Left colon (tissue), 2 donors: ENCODE measurements at regions of chr4 and their contacts with region 1.

Region 1: DNA sequence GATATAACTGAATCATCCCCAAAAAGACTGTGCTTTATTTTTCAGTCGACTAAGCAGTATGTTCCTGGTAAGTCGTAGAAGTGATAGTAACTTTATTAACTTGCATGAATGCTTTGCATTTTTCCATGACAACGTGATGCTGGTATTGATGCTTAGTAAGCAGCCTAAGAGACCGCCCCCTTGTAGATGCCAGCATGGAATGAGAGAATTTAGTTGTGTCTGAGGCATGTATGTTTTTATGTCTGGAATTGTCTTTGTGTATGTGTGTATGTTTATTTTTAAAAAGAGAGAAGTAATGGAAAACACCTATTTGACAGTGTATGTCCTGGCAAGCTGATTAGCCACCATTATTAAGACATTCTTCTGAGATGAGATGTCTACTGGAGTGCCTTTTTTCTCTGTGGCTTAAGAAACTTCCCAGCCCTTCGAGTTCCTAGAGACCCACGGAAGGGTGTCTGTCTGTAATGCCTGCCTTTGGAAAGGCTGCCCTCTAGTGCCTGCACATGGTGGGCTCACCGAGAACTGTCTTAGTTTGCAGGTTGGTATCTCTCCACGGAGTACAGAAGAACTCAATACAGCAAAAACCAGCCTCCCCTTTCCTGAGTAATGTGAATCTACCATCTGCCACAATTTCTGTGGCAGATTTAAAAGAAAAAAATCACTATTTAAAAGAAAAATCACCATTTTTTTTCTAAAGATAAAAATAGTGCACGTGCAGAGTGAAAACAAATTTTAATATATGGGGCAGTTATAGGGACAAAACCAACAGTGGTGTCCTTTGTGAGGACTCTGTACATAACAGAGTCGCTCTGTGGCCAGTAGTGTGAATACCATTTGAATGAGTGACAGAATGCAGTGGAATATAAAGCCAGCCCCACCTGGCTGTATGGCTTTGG is 85.9 kb downstream of the AASDH start:
- DNase-seq: peak; percentile 56 to 80
- ATAC-seq: peak; percentile 79

Region 2: DNA sequence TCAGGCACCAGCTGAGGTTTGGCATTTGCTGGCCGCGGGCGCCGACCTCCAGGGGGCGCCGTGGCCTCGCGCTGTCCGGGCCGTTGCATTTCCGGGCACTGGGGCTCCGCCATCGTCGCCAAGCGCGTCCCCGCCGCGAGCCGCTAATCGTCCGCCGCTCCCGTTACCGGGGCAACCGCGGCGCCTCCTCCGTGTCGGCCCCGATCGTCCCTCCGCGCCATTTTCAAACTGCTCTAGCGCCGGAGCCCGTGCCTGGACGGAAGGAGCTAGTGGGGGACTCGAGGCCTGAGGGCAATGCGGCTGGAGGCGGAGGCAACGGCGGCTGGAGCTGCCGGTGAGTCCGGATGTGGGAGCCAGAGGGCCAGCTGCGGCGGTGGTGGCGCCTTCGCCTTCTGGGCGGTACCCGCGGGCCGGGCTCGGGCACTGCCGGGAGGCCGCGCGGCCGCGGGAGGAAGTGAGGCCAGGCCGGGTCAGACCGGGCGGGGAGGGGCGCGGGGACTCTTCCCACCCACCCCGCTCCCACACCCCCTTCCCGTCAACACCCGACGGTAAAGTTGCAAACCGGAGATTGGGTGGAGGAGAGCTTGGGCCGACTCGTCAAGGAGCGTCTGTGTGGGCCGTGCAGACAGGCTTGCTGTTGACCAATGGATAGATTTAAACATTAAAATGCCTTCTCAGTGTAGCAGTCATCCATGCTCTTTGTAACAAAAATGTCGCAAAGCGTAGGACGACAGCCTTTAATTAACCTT is 352.5 kb before region 1 on chr4 and contains the start of gene CEP135:
- intact Hi-C with region 1: loop called in 1 of 2 experiments (anchors 10 kb)
- DNase-seq: peak; percentile 94 to 96
- ATAC-seq: peak; percentile 94
- total RNA-seq, gene CEP135: 4.9 to 5.3 TPM

Region 3: GRCh38 chr4:56480691-56481090 is 179.3 kb after region 1 on chr4:
- intact Hi-C with region 1: no loop called
- DNase-seq: no peak
- ATAC-seq: no peak